ENCODE measurements at regions of chr9 and their contacts with region 1.

Region 1: GRCh38 chr9:97982683-97983588 is at the start of gene ANP32B:
- DNase-seq: peak; percentile 87 to 97 (median 94)
- ATAC-seq: peak; percentile 83
- H3K4me3 ChIP-seq: peak within 1 kb of the TSS; percentile 75 to 92
- H3K4me3 Mint-ChIP-seq: peak within 1 kb of the TSS; percentile 92
- H3K27ac ChIP-seq: peak within 1 kb of the TSS; percentile 75 to 85
- H3K27ac Mint-ChIP-seq: peak within 1 kb of the TSS; percentile 93
- H3K4me1 ChIP-seq: peaks cover 53% of the 10 kb centered on the region
- H3K4me1 Mint-ChIP-seq: peaks cover 64% of the 10 kb centered on the region
- H3K27me3 ChIP-seq: no peaks in the 10 kb centered on the region
- H3K27me3 Mint-ChIP-seq: no peaks in the 10 kb centered on the region
- CTCF ChIP-seq: peak; percentile 94
- total RNA-seq, gene ANP32B: 168 to 177 TPM

Region 2: DNA sequence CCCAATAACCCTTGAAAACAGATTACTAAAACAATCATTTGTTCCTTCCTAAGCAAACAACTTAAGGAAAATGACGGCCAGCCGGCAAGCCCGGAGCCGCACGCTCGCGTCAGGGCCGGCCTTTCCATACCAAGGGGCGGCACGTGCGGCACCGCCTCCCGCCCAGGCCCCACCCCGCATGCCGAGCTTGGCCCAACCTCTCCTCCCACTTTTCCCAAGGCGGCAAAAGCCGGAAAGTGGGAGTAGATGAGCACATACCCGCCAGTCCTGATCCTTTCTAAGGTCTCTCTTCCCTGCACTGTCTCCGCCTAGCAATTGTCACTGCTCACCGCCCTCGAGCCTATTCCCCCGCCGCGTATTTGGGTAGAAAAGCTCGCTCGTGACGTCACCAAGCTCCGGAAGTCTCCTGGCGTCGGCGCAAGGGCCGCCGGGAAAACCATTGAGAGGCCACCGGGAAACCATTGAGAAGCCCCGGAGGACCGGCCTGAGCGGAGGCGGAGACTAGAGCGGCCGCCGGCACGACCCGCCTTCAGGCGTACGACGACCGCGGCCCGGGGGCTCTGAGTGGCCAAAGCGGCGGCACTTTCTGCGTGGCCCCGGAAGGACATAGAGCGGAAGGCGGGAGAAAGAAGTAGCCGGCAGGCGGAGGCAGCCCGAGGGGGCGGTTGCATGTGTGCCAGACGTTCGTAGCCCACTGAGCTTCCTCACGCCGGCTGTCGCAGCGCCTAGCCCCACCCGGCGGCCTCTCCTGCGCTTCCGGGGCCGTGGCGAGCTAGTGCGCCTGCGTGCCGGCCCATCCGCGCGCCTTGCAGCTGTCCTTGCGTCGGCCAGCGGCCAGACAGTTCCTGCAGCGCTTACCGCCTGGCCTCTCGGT is 349.7 kb before region 1 on chr9 and contains the starts of genes NCBP1 and TSTD2:
- CTCF ChIA-PET with region 1: no interaction called
- POLR2A ChIA-PET with region 1: interaction called, 5 read pairs
- intact Hi-C with region 1: loop called in 1 of 2 experiments (anchors 5 kb)
- DNase-seq: peak; percentile 89 to 98 (median 95)
- ATAC-seq: peak; percentile 86
- H3K4me3 ChIP-seq: peak within 1 kb of the TSS; percentile 96 to 97
- H3K4me3 Mint-ChIP-seq: peak within 1 kb of the TSS; percentile 96
- H3K27ac ChIP-seq: peak within 1 kb of the TSS; percentile 88 to 97
- H3K27ac Mint-ChIP-seq: peak within 1 kb of the TSS; percentile 99
- H3K4me1 ChIP-seq: peaks cover 45% of the 10 kb centered on the region
- H3K4me1 Mint-ChIP-seq: peaks cover 57% of the 10 kb centered on the region
- H3K27me3 ChIP-seq: no peaks in the 10 kb centered on the region
- H3K27me3 Mint-ChIP-seq: no peaks in the 10 kb centered on the region
- CTCF ChIP-seq: no peak
- total RNA-seq, gene NCBP1: 50.7 to 58.5 TPM
- total RNA-seq, gene TSTD2: 34.3 to 40.8 TPM

Region 3: GRCh38 chr9:97938081-97938644 is 44.8 kb before region 1 on chr9 and contains the start of gene HEMGN:
- CTCF ChIA-PET with region 1: interaction called, 6 read pairs
- POLR2A ChIA-PET with region 1: interaction called, 7 read pairs
- intact Hi-C with region 1: loop called in 1 of 2 experiments (anchors 5 kb)
- DNase-seq: peak in 7 of 9 experiments; percentile 29 to 86 (median 55)
- ATAC-seq: peak; percentile 98
- H3K4me3 ChIP-seq: no peak within 1 kb of the TSS
- H3K4me3 Mint-ChIP-seq: peak within 1 kb of the TSS; percentile 56
- H3K27ac ChIP-seq: peak within 1 kb of the TSS; percentile 6 to 65
- H3K27ac Mint-ChIP-seq: peak within 1 kb of the TSS; percentile 92
- H3K4me1 ChIP-seq: peaks cover 39% of the 10 kb centered on the region
- H3K4me1 Mint-ChIP-seq: peaks cover 41% of the 10 kb centered on the region
- H3K27me3 ChIP-seq: no peaks in the 10 kb centered on the region
- H3K27me3 Mint-ChIP-seq: no peaks in the 10 kb centered on the region
- CTCF ChIP-seq: no peak
- total RNA-seq, gene HEMGN: 0.14 to 0.33 TPM

Region 4: GRCh38 chr9:97972753-97973152 is 10.2 kb before region 1 on chr9:
- CTCF ChIA-PET with region 1: interaction called, 10 read pairs
- POLR2A ChIA-PET with region 1: interaction called, 19 read pairs
- intact Hi-C with region 1: loop called in 1 of 2 experiments (anchors 1 kb)
- DNase-seq: no peak
- ATAC-seq: no peak
- H3K4me3 ChIP-seq: no peak overlapping the region
- H3K4me3 Mint-ChIP-seq: no peak overlapping the region
- H3K27ac ChIP-seq: no peak overlapping the region
- H3K27ac Mint-ChIP-seq: peak overlapping the region; percentile 64
- H3K4me1 ChIP-seq: peaks cover 12% of the 10 kb centered on the region
- H3K4me1 Mint-ChIP-seq: peaks cover 16% of the 10 kb centered on the region
- H3K27me3 ChIP-seq: no peaks in the 10 kb centered on the region
- H3K27me3 Mint-ChIP-seq: no peaks in the 10 kb centered on the region
- CTCF ChIP-seq: no peak

Region 5: GRCh38 chr9:98101868-98102273 is 118.9 kb after region 1 on chr9:
- CTCF ChIA-PET with region 1: no interaction called
- POLR2A ChIA-PET with region 1: interaction called, 5 read pairs
- intact Hi-C with region 1: loop called in 1 of 2 experiments (anchors 1 kb)
- DNase-seq: peak; percentile 64 to 97 (median 82)
- ATAC-seq: peak; percentile 95
- H3K4me3 ChIP-seq: peak overlapping the region; percentile 3 to 8
- H3K4me3 Mint-ChIP-seq: peak overlapping the region; percentile 68
- H3K27ac ChIP-seq: peak overlapping the region; percentile 33 to 76
- H3K27ac Mint-ChIP-seq: peak overlapping the region; percentile 97
- H3K4me1 ChIP-seq: peaks cover 87% of the 10 kb centered on the region
- H3K4me1 Mint-ChIP-seq: peaks cover 82% of the 10 kb centered on the region
- H3K27me3 ChIP-seq: no peaks in the 10 kb centered on the region
- H3K27me3 Mint-ChIP-seq: no peaks in the 10 kb centered on the region
- CTCF ChIP-seq: no peak

Region 6: DNA sequence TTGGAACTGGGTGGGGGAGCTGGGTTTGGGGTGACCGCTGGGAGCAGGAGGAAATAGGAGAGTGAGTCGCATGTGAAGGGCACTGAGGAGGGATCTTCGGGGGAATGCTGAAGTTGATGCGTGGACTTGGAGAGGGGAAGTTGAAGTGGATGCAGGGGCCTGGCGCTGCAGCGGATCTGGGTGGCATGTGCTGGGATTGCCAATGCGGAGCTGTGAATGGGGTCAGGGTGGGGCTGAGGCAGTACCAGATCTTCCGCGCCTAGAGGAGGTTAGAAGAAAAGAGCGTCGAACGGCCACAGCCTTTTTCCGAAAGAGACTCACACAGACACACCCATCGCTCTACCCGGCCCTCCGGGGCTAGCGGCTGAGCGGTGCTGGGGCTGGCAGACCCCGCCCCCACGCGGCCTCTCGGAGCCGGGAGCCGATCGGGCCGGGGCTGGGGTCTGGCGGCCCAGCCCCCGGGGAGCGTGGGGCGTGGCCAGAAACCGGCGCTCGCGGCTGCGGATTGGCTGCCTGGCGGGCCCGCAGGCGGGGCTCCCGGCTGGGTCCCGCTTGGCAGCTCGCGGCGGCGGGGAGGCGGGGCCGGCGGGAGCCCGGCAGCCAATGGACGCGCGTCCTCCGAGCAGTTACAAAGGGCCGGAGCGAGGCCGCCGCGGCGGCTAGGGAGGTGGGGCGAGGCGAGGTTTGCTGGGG is 1121.7 kb after region 1 on chr9 and contains the start of gene TGFBR1:
- CTCF ChIA-PET with region 1: no interaction called
- POLR2A ChIA-PET with region 1: no interaction called
- intact Hi-C with region 1: loop called in 1 of 2 experiments (anchors 10 kb)
- DNase-seq: peak; percentile 81 to 96 (median 89)
- ATAC-seq: peak; percentile 81
- H3K4me3 ChIP-seq: peak within 1 kb of the TSS; percentile 68 to 85
- H3K4me3 Mint-ChIP-seq: peak within 1 kb of the TSS; percentile 90
- H3K27ac ChIP-seq: peak within 1 kb of the TSS; percentile 57 to 70
- H3K27ac Mint-ChIP-seq: peak within 1 kb of the TSS; percentile 91
- H3K4me1 ChIP-seq: peaks cover 48% of the 10 kb centered on the region
- H3K4me1 Mint-ChIP-seq: peaks cover 64% of the 10 kb centered on the region
- H3K27me3 ChIP-seq: no peaks in the 10 kb centered on the region
- H3K27me3 Mint-ChIP-seq: no peaks in the 10 kb centered on the region
- CTCF ChIP-seq: no peak
- total RNA-seq, gene TGFBR1: 24.2 to 25.8 TPM